ENCODE measurements at regions of chr11 and their contacts with region 1.

Region 1: GRCh38 chr11:82790723-82791484 is 57.2 kb upstream of the FAM181B start:
- DNase-seq: no peak
- H3K4me3 ChIP-seq: no peak overlapping the region
- H3K27ac ChIP-seq: no peak overlapping the region
- H3K4me1 ChIP-seq: no peaks in the 10 kb centered on the region
- H3K27me3 ChIP-seq: no peaks in the 10 kb centered on the region
- CTCF ChIP-seq: no peak
- POLR2A ChIP-seq: no peak

Region 2: GRCh38 chr11:82818409-82819043 is 27.6 kb after region 1 on chr11:
- intact Hi-C with region 1: loop called (anchors 2 kb)
- DNase-seq: no peak
- H3K4me3 ChIP-seq: no peak overlapping the region
- H3K27ac ChIP-seq: no peak overlapping the region
- H3K4me1 ChIP-seq: no peaks in the 10 kb centered on the region
- H3K27me3 ChIP-seq: peaks cover 0 to 9% (median 0%) of the 10 kb centered on the region in 7 donors
- CTCF ChIP-seq: no peak
- POLR2A ChIP-seq: no peak

Measured in spleen (tissue), 13 donors.